T-cell (primary cell): ENCODE measurements at regions of chr6 and their contacts with region 1.

Region 1: DNA sequence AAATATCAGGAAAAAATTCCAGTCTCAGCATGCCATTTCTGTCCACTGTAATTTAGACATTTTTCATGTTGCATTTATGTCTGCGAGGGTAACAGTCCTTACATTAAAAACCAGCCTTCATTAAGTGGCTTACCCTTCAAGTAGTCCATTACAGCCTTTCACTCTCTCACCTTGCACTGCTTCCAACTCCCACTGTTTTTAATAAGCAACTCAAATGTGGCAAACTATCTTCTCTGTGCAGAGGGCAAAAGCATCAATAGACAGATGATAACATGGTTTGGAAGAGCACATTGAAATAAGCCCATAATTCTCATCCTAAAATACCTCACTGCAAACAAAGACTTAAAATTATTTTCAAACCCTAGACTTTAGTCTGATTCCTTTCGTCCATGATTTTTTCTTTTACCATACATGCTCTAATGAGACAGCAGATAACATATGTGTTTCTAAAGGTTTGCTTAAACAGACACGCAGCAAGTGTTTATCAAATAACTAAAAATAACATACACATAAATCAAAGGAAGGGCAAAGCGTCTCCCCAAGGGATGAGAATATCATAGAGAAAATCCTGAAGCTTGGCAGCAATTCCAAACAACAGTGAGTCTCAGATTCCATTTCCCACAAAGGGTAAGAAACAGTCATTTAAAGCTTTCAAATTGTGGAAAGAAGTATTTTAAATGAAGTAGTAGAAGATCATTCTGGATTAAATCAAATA is 130.4 kb downstream of the PTPRK start:
- DNase-seq: no peak
- ATAC-seq: no peak
- H3K4me3 ChIP-seq: no peak overlapping the region
- H3K4me3 Mint-ChIP-seq: no peak overlapping the region
- H3K27ac ChIP-seq: no peak overlapping the region
- H3K27ac Mint-ChIP-seq: no peak overlapping the region
- H3K4me1 ChIP-seq: no peaks in the 10 kb centered on the region
- H3K4me1 Mint-ChIP-seq: no peaks in the 10 kb centered on the region
- H3K27me3 ChIP-seq: no peaks in the 10 kb centered on the region
- H3K27me3 Mint-ChIP-seq: no peaks in the 10 kb centered on the region

Region 2: DNA sequence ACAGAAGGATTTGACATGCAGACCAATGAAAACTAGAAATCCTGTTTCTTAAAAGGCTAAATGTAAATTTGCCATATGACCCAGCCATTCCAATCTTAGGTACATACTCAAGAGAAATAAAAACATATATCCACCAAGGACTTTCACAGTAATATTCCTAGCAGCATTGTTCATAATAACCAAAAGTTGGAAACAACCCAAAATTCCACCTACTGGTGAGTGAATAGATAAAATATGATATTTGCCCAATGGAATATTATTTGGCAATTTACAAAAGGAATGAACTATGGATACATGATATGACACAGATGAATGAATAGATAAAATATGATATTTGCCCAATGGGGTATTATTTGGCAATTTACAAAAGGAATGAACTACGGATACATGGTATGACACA is 893.5 kb before region 1 on chr6:
- CTCF ChIA-PET with region 1: no interaction called
- POLR2A ChIA-PET with region 1: interaction called in 1 of 2 experiments, 11 read pairs
- DNase-seq: no peak
- ATAC-seq: no peak
- H3K4me3 ChIP-seq: no peak overlapping the region
- H3K4me3 Mint-ChIP-seq: no peak overlapping the region
- H3K27ac ChIP-seq: no peak overlapping the region
- H3K27ac Mint-ChIP-seq: no peak overlapping the region
- H3K4me1 ChIP-seq: no peaks in the 10 kb centered on the region
- H3K4me1 Mint-ChIP-seq: peaks cover 0 to 4% (median 0%) of the 10 kb centered on the region in 3 donors
- H3K27me3 ChIP-seq: no peaks in the 10 kb centered on the region
- H3K27me3 Mint-ChIP-seq: peaks cover 0 to 6% of the 10 kb centered on the region in 2 donors

Region 3: GRCh38 chr6:128713461-128713860 is 323.5 kb after region 1 on chr6:
- CTCF ChIA-PET with region 1: no interaction called
- POLR2A ChIA-PET with region 1: no interaction called
- DNase-seq: no peak
- ATAC-seq: no peak
- H3K4me3 ChIP-seq: no peak overlapping the region
- H3K4me3 Mint-ChIP-seq: no peak overlapping the region
- H3K27ac ChIP-seq: no peak overlapping the region
- H3K27ac Mint-ChIP-seq: no peak overlapping the region
- H3K4me1 ChIP-seq: no peaks in the 10 kb centered on the region
- H3K4me1 Mint-ChIP-seq: no peaks in the 10 kb centered on the region
- H3K27me3 ChIP-seq: no peaks in the 10 kb centered on the region
- H3K27me3 Mint-ChIP-seq: peaks cover 7 to 18% of the 10 kb centered on the region in 2 donors